Panc1 (cell line): ENCODE measurements at regions of chr2 and their contacts with region 1.

Region 1: GRCh38 chr2:237558906-237559641 is 7.3 kb upstream of the PRLH start:
- DNase-seq: no peak
- ATAC-seq: no peak
- H3K4me3 ChIP-seq: no peak overlapping the region
- H3K27ac ChIP-seq: no peak overlapping the region
- H3K4me1 ChIP-seq: no peaks in the 10 kb centered on the region
- H3K27me3 ChIP-seq: no peaks in the 10 kb centered on the region
- CTCF ChIP-seq: no peak

Region 2: DNA sequence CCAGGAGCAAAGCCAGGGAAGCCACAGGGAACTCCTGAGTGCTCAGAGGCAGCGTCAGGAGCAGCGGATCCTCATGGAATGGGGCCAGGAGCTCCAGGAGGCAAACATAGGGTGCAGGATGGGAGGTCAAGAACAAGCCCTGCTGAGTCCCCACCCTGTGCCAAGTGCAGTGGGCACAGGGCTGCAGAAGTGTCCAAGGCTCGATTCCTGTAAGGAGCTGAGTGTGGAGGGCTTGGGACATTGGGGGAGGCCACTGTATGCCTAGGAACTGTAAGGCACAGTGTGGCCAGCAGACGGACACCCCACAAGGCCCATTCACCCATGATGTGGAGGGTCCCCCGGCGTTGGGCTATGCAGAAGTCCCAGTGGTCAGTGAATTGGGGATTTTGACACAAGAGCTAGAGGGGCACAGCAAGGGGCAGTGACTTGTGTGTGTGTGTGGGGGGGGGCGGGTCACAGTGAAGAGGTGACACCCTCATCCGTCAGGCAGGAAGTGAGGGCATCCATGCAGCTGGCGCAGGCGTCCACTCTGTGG is 933.9 kb before region 1 on chr2:
- CTCF ChIA-PET with region 1: no interaction called
- POLR2A ChIA-PET with region 1: interaction called, 17 read pairs
- in situ Hi-C with region 1: no loop called
- intact Hi-C with region 1: no loop called
- DNase-seq: no peak
- ATAC-seq: no peak
- H3K4me3 ChIP-seq: no peak overlapping the region
- H3K27ac ChIP-seq: no peak overlapping the region
- H3K4me1 ChIP-seq: no peaks in the 10 kb centered on the region
- H3K27me3 ChIP-seq: peaks cover under 1% of the 10 kb centered on the region; the same call in 1 of the 2 replicates
- CTCF ChIP-seq: no peak

Region 3: DNA sequence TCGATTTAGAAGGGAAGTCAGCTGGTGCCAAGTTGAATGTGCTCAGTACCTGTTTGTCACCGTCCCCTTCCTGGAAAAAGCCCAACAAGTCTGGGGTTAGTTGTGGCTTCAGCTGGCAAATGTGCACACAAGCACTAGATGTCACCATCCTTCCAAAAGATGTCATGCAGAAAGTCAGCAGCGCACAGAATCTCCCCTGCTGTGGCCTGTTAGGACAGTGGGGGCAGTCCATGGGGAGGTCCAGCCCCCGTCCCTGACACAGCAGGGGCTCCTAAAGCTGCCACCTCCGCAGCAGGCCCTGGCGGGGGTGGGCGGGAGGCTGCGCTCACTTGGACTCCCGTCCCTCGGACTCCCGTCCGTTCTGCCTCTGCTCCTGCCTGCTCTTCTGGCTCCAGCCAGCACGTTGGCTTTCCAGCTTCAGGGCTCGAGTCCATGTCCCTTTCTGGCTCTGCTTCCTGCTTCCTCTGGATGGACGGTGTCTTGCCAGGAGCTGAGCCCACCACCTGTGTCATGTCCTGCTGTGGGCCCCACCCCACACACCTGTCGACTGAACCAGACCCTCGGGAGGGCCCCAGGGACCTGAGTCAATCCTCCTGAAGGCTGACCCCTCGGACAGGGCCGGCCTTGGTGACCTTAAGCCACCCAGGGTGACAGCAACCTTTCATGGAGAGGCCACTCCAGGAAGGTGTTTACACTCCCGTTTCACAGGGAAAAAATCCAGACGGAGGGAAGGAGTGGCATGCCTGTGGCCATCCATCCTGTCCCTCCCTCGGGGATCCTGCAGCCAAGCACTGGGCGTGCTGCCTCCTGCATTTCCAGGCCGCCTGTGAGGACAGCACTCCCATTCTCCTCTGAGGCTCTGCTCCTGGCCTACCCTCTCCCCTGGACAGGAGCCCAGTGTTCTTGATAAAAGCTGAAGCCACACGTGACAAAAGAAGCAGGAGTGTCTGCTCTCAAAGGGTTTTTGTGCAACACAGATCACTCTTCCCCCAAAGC is 23.0 kb after region 1 on chr2:
- CTCF ChIA-PET with region 1: no interaction called
- POLR2A ChIA-PET with region 1: no interaction called
- in situ Hi-C with region 1: no loop called
- intact Hi-C with region 1: no loop called
- DNase-seq: no peak
- ATAC-seq: peak; percentile 86
- H3K4me3 ChIP-seq: peak overlapping the region in 1 of 2 experiments; percentile 20; a peak in 2 of 4 replicates
- H3K27ac ChIP-seq: peak overlapping the region; percentile 48; the same call in 1 of the 2 replicates
- H3K4me1 ChIP-seq: peaks cover 10% of the 10 kb centered on the region
- H3K27me3 ChIP-seq: no peaks in the 10 kb centered on the region
- CTCF ChIP-seq: peak; percentile 74